ENCODE measurements at regions of chr2 and their contacts with region 1.

Region 1: DNA sequence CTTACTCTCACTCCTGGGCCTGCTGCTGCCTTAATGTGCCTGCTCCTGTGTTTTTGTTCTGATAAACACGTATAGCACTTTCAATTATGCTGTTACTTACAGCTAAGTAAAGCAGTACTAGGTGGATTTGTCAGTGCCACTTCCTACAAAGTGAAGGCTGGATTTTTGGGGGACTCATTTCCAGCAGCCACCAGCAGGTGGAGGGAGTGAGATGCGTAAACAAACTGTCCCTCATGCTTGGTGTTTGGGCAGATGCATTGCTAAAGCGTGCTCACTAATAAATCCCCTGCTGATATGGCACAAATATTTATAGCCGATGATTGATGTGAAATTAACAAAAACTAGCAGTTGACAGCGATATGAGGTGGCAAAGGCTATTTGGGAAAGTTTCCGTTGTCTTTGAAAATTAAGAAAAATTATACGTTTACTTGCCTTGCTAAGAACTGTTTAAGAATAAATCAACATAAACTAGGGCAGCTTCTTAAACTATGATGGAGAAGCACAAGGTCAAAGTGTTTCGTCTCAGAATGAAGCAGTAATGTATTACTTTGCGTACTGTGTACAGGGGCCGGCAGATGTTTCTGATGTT is 101.7 kb downstream of the AGAP1 start:
- DNase-seq: peak; percentile 51
- H3K4me3 ChIP-seq: no peak overlapping the region
- H3K27ac ChIP-seq: no peak overlapping the region
- H3K4me1 ChIP-seq: peaks cover 14% of the 10 kb centered on the region
- H3K27me3 ChIP-seq: no peaks in the 10 kb centered on the region
- CTCF ChIP-seq: peak; percentile 85 to 89

Region 2: GRCh38 chr2:234550511-234551107 is 1044.9 kb before region 1 on chr2:
- CTCF ChIA-PET with region 1: no interaction called
- dilution Hi-C with region 1: no loop called
- in situ Hi-C with region 1: no loop called
- intact Hi-C with region 1: loop called (anchors 2 kb)
- DNase-seq: peak; percentile 62
- H3K4me3 ChIP-seq: no peak overlapping the region
- H3K27ac ChIP-seq: no peak overlapping the region
- H3K4me1 ChIP-seq: peaks cover 5% of the 10 kb centered on the region
- H3K27me3 ChIP-seq: no peaks in the 10 kb centered on the region
- CTCF ChIP-seq: peak; percentile 90 to 96

Region 3: GRCh38 chr2:235433860-235434259 is 161.7 kb before region 1 on chr2:
- CTCF ChIA-PET with region 1: interaction called, 3 read pairs
- dilution Hi-C with region 1: no loop called
- in situ Hi-C with region 1: no loop called
- intact Hi-C with region 1: loop called (anchors 10 kb)
- DNase-seq: no peak
- H3K4me3 ChIP-seq: no peak overlapping the region
- H3K27ac ChIP-seq: no peak overlapping the region
- H3K4me1 ChIP-seq: no peaks in the 10 kb centered on the region
- H3K27me3 ChIP-seq: peaks cover 3% of the 10 kb centered on the region
- CTCF ChIP-seq: no peak

Region 4: GRCh38 chr2:235642446-235643098 is 47.1 kb after region 1 on chr2:
- CTCF ChIA-PET with region 1: interaction called, 5 read pairs
- dilution Hi-C with region 1: no loop called
- in situ Hi-C with region 1: no loop called
- intact Hi-C with region 1: loop called (anchors 5 kb)
- DNase-seq: peak; percentile 42
- H3K4me3 ChIP-seq: no peak overlapping the region
- H3K27ac ChIP-seq: no peak overlapping the region
- H3K4me1 ChIP-seq: peaks cover 18% of the 10 kb centered on the region
- H3K27me3 ChIP-seq: no peaks in the 10 kb centered on the region
- CTCF ChIP-seq: peak in 1 of 2 donors; percentile 1

Region 5: GRCh38 chr2:235740821-235741220 is 145.3 kb after region 1 on chr2:
- CTCF ChIA-PET with region 1: interaction called, 16 read pairs
- dilution Hi-C with region 1: no loop called
- in situ Hi-C with region 1: loop called (anchors 5 kb)
- intact Hi-C with region 1: loop called (anchors 1 kb)
- DNase-seq: no peak
- H3K4me3 ChIP-seq: no peak overlapping the region
- H3K27ac ChIP-seq: no peak overlapping the region
- H3K4me1 ChIP-seq: peaks cover 4% of the 10 kb centered on the region
- H3K27me3 ChIP-seq: no peaks in the 10 kb centered on the region
- CTCF ChIP-seq: peak; percentile 33 to 43

Region 6: GRCh38 chr2:235864733-235865515 is 269.4 kb after region 1 on chr2:
- CTCF ChIA-PET with region 1: no interaction called
- dilution Hi-C with region 1: no loop called
- in situ Hi-C with region 1: no loop called
- intact Hi-C with region 1: no loop called
- DNase-seq: no peak
- H3K4me3 ChIP-seq: no peak overlapping the region
- H3K27ac ChIP-seq: no peak overlapping the region
- H3K4me1 ChIP-seq: no peaks in the 10 kb centered on the region
- H3K27me3 ChIP-seq: no peaks in the 10 kb centered on the region
- CTCF ChIP-seq: no peak

Measured in mammary epithelial cell (primary cell).